Panc1 (cell line): ENCODE measurements at regions of chr11 and their contacts with region 1.

Region 1: GRCh38 chr11:77411717-77412441 is 62.0 kb downstream of the PAK1 start:
- DNase-seq: no peak
- ATAC-seq: peak; percentile 97
- H3K4me3 ChIP-seq: peak overlapping the region; percentile 56 to 82
- H3K27ac ChIP-seq: peak overlapping the region; percentile 78
- H3K4me1 ChIP-seq: peaks cover 21% of the 10 kb centered on the region
- H3K27me3 ChIP-seq: no peaks in the 10 kb centered on the region
- CTCF ChIP-seq: no peak

Region 2: GRCh38 chr11:77442394-77443053 is 30.6 kb after region 1 on chr11:
- CTCF ChIA-PET with region 1: no interaction called
- POLR2A ChIA-PET with region 1: interaction called, 13 read pairs
- in situ Hi-C with region 1: no loop called
- intact Hi-C with region 1: no loop called
- DNase-seq: no peak
- ATAC-seq: no peak
- H3K4me3 ChIP-seq: no peak overlapping the region
- H3K27ac ChIP-seq: no peak overlapping the region
- H3K4me1 ChIP-seq: no peaks in the 10 kb centered on the region
- H3K27me3 ChIP-seq: peaks cover 9% of the 10 kb centered on the region; the same call in 1 of the 2 replicates
- CTCF ChIP-seq: no peak

Region 3: GRCh38 chr11:77473801-77474683 is 62.2 kb after region 1 on chr11 and contains the start of gene PAK1:
- CTCF ChIA-PET with region 1: interaction called, 14 read pairs
- POLR2A ChIA-PET with region 1: no interaction called
- in situ Hi-C with region 1: no loop called
- intact Hi-C with region 1: no loop called
- DNase-seq: peak; percentile 88
- ATAC-seq: peak; percentile 87
- H3K4me3 ChIP-seq: peak within 1 kb of the TSS; percentile 52 to 73
- H3K27ac ChIP-seq: peak within 1 kb of the TSS; percentile 6; the same call in 1 of the 2 replicates
- H3K4me1 ChIP-seq: peaks cover 6% of the 10 kb centered on the region
- H3K27me3 ChIP-seq: peaks cover 19% of the 10 kb centered on the region
- CTCF ChIP-seq: no peak
- total RNA-seq, gene PAK1: 38.2 TPM

Region 4: GRCh38 chr11:77672264-77672663 is 260.4 kb after region 1 on chr11:
- CTCF ChIA-PET with region 1: interaction called, 16 read pairs
- POLR2A ChIA-PET with region 1: no interaction called
- in situ Hi-C with region 1: no loop called
- intact Hi-C with region 1: no loop called
- DNase-seq: no peak
- ATAC-seq: peak; percentile 68; the same call in 1 of the 2 replicates
- H3K4me3 ChIP-seq: no peak overlapping the region
- H3K27ac ChIP-seq: no peak overlapping the region
- H3K4me1 ChIP-seq: no peaks in the 10 kb centered on the region
- H3K27me3 ChIP-seq: no peaks in the 10 kb centered on the region
- CTCF ChIP-seq: no peak